ENCODE measurements at regions of chr1 and their contacts with region 1.

Region 1: GRCh38 chr1:155017041-155017945 is 14.7 kb downstream of the ZBTB7B start:
- DNase-seq: peak; percentile 82 to 89 (median 87)
- H3K4me3 ChIP-seq: peak overlapping the region; percentile 2 to 68 (median 23)
- H3K4me3 Mint-ChIP-seq: peak overlapping the region; percentile 59 to 61
- H3K27ac ChIP-seq: peak overlapping the region; percentile 53 to 56
- H3K27ac Mint-ChIP-seq: peak overlapping the region; percentile 18 to 87 (median 60)
- H3K4me1 ChIP-seq: peaks cover 60 to 66% of the 10 kb centered on the region in 2 donors
- H3K4me1 Mint-ChIP-seq: peaks cover 68% of the 10 kb centered on the region
- H3K27me3 ChIP-seq: no peaks in the 10 kb centered on the region
- H3K27me3 Mint-ChIP-seq: peaks cover 0 to 5% (median 2%) of the 10 kb centered on the region in 3 donors
- CTCF ChIP-seq: peak; percentile 100

Region 2: DNA sequence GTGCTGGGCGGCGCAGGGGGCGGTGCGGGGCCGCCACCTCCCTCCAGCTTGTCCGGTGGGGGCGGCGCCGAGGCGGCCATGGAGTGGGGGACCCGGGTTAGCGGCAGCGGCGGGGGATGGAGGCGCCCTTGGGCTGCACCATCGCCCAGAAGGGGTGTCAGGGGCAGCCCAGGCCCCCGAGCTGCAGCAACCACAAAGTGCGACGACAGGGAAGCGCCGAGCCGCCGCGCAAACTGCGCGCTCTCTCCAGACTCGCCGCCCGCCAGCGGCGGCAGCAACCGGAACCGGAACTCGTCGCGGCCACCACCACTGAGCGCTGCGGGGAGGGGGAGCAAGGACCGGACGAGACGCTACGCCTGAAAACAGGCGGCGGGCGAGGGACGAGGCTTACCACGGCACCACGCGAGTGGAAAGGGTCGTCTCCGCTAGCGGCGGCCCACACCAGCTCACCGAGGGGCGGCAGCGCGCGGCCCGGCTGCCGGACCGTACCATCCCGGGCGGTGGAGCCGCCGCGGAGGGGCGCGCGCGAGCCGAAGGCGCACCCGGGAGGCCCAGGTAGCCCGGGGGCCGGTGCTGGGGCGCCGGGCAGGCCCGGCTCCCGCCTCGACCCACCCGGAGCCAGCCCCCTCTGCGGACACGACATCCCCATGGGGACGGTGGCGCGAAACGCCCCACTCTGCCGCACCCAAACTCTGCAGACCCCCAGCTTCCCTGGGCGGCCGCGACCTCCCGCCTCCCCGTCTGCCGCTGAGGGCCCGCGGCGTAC is 55.6 kb before region 1 on chr1 and contains the start of gene PYGO2:
- intact Hi-C with region 1: loop called in 1 of 2 experiments (anchors 5 kb)
- DNase-seq: peak; percentile 64 to 68 (median 64)
- H3K4me3 ChIP-seq: peak within 1 kb of the TSS; percentile 73 to 95 (median 93)
- H3K4me3 Mint-ChIP-seq: peak within 1 kb of the TSS; percentile 81 to 91
- H3K27ac ChIP-seq: peak within 1 kb of the TSS; percentile 57 to 90
- H3K27ac Mint-ChIP-seq: peak within 1 kb of the TSS; percentile 78 to 92 (median 87)
- H3K4me1 ChIP-seq: peaks cover 19 to 34% of the 10 kb centered on the region in 2 donors
- H3K4me1 Mint-ChIP-seq: peaks cover 27% of the 10 kb centered on the region
- H3K27me3 ChIP-seq: no peaks in the 10 kb centered on the region
- H3K27me3 Mint-ChIP-seq: peaks cover 0 to 2% (median 0%) of the 10 kb centered on the region in 3 donors
- CTCF ChIP-seq: peak; percentile 85
- polyA plus RNA-seq, gene PYGO2: 8.2 to 12.5 (median 12.0) TPM

Region 3: GRCh38 chr1:154982897-154983648 is 34.2 kb before region 1 on chr1 and contains the start of gene FLAD1:
- intact Hi-C with region 1: loop called in 1 of 2 experiments (anchors 5 kb)
- DNase-seq: peak; percentile 96 to 100 (median 98)
- H3K4me3 ChIP-seq: peak within 1 kb of the TSS; percentile 51 to 97 (median 92)
- H3K4me3 Mint-ChIP-seq: no peak within 1 kb of the TSS
- H3K27ac ChIP-seq: peak within 1 kb of the TSS in 1 of 2 donors; percentile 85
- H3K27ac Mint-ChIP-seq: peak within 1 kb of the TSS in 1 of 7 donors; percentile 7
- H3K4me1 ChIP-seq: peaks cover 19 to 27% of the 10 kb centered on the region in 2 donors
- H3K4me1 Mint-ChIP-seq: peaks cover 9% of the 10 kb centered on the region
- H3K27me3 ChIP-seq: no peaks in the 10 kb centered on the region
- H3K27me3 Mint-ChIP-seq: no peaks in the 10 kb centered on the region
- CTCF ChIP-seq: no peak
- polyA plus RNA-seq, gene FLAD1: 31.5 to 41.6 (median 35.1) TPM

Region 4: GRCh38 chr1:155479205-155479604 is 461.9 kb after region 1 on chr1:
- intact Hi-C with region 1: no loop called
- DNase-seq: no peak
- H3K4me3 ChIP-seq: no peak overlapping the region
- H3K4me3 Mint-ChIP-seq: no peak overlapping the region
- H3K27ac ChIP-seq: peak overlapping the region in 1 of 2 donors; percentile 39
- H3K27ac Mint-ChIP-seq: peak overlapping the region in 2 of 7 donors; percentile 16 to 61
- H3K4me1 ChIP-seq: no peaks in the 10 kb centered on the region
- H3K4me1 Mint-ChIP-seq: peaks cover 8% of the 10 kb centered on the region
- H3K27me3 ChIP-seq: no peaks in the 10 kb centered on the region
- H3K27me3 Mint-ChIP-seq: no peaks in the 10 kb centered on the region
- CTCF ChIP-seq: no peak

Measured in CD14-positive monocyte (primary cell).